IMR-90 (cell line): ENCODE measurements at regions of chr13 and their contacts with region 1.

Region 1: GRCh38 chr13:28658796-28659620 is at the start of gene POMP:
- DNase-seq: peak; percentile 95
- ATAC-seq: peak; percentile 80
- H3K4me3 ChIP-seq: peak within 1 kb of the TSS; percentile 93
- H3K27ac ChIP-seq: peak within 1 kb of the TSS; percentile 90
- H3K4me1 ChIP-seq: peaks cover 8% of the 10 kb centered on the region
- H3K27me3 ChIP-seq: no peaks in the 10 kb centered on the region
- CTCF ChIP-seq: no peak
- POLR2A ChIP-seq: peak; percentile 97
- RAD21 ChIP-seq: peak; percentile 25; the same call in 1 of the 2 replicates
- total RNA-seq, gene POMP: 60.2 and 117 TPM in 2 replicates

Region 2: GRCh38 chr13:28047757-28048388 is 611.1 kb before region 1 on chr13:
- CTCF ChIA-PET with region 1: no interaction called
- POLR2A ChIA-PET with region 1: no interaction called
- dilution Hi-C with region 1: no loop called
- in situ Hi-C with region 1: no loop called
- intact Hi-C with region 1: loop called (anchors 10 kb)
- DNase-seq: peak; percentile 79
- ATAC-seq: peak; percentile 7; the same call in 1 of the 2 replicates
- H3K4me3 ChIP-seq: no peak overlapping the region
- H3K27ac ChIP-seq: no peak overlapping the region
- H3K4me1 ChIP-seq: peaks cover 7% of the 10 kb centered on the region
- H3K27me3 ChIP-seq: no peaks in the 10 kb centered on the region
- CTCF ChIP-seq: no peak
- POLR2A ChIP-seq: no peak
- RAD21 ChIP-seq: no peak

Region 3: GRCh38 chr13:28329395-28330158 is 329.4 kb before region 1 on chr13:
- CTCF ChIA-PET with region 1: interaction called, 4 read pairs
- POLR2A ChIA-PET with region 1: no interaction called
- dilution Hi-C with region 1: no loop called
- in situ Hi-C with region 1: no loop called
- intact Hi-C with region 1: loop called (anchors 2 kb)
- DNase-seq: peak; percentile 97
- ATAC-seq: peak; percentile 98
- H3K4me3 ChIP-seq: no peak overlapping the region
- H3K27ac ChIP-seq: peak overlapping the region; percentile 57
- H3K4me1 ChIP-seq: peaks cover 12% of the 10 kb centered on the region
- H3K27me3 ChIP-seq: no peaks in the 10 kb centered on the region
- CTCF ChIP-seq: no peak
- POLR2A ChIP-seq: peak; percentile 48; the same call in 1 of the 2 replicates
- RAD21 ChIP-seq: peak; percentile 37

Region 4: DNA sequence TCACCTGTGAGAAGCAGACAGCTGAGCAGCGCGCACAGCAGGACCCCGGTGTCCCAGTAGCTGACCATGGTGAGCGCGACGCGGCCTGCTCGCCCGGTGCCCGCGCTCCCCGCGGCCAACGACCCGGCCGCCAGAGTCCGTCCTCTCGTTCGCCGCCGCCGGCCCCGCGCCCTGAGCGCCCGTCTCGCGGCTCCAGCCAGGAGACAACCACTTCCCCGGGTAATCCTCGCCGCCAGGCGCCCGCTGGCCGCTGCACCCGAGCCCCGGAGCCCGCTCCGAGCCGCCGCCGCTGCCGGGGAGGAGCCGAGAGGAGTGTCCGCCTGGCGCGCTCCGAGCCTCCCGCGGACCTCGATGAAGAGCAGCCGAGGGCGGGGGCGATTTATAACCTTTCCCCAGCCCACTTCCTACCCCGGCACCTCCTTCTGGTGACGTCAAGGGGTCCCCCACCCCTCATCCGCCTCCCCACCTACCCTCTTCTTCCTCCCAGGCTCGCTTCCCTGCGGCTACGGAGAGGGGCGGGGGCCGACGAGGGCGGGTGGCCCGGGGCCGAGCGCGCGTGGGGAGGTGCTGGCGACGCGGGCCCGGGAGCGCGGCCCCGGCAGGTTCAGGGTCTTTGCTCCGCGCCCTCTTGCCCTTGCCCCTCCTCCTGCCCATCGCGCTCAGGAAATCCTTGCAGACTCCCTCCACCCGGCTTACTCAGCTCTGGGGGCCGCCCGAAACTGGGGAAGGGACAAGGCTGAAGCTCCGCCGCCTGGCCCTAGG is 164.1 kb before region 1 on chr13 and contains the start of gene FLT1:
- CTCF ChIA-PET with region 1: no interaction called
- POLR2A ChIA-PET with region 1: no interaction called
- dilution Hi-C with region 1: no loop called
- in situ Hi-C with region 1: no loop called
- intact Hi-C with region 1: loop called (anchors 5 kb)
- DNase-seq: peak; percentile 38
- ATAC-seq: peak; percentile 68
- H3K4me3 ChIP-seq: peak within 1 kb of the TSS; percentile 94
- H3K27ac ChIP-seq: no peak within 1 kb of the TSS; the same call in 1 of the 2 replicates
- H3K4me1 ChIP-seq: peaks cover 4% of the 10 kb centered on the region; the same call in 1 of the 2 replicates
- H3K27me3 ChIP-seq: peaks cover 22% of the 10 kb centered on the region; the same call in 1 of the 2 replicates
- CTCF ChIP-seq: no peak
- POLR2A ChIP-seq: peak; percentile 64; the same call in 1 of the 2 replicates
- RAD21 ChIP-seq: no peak; the same call in 1 of the 2 replicates
- total RNA-seq, gene FLT1: 10.0 and 10.4 TPM in 2 replicates

Region 5: DNA sequence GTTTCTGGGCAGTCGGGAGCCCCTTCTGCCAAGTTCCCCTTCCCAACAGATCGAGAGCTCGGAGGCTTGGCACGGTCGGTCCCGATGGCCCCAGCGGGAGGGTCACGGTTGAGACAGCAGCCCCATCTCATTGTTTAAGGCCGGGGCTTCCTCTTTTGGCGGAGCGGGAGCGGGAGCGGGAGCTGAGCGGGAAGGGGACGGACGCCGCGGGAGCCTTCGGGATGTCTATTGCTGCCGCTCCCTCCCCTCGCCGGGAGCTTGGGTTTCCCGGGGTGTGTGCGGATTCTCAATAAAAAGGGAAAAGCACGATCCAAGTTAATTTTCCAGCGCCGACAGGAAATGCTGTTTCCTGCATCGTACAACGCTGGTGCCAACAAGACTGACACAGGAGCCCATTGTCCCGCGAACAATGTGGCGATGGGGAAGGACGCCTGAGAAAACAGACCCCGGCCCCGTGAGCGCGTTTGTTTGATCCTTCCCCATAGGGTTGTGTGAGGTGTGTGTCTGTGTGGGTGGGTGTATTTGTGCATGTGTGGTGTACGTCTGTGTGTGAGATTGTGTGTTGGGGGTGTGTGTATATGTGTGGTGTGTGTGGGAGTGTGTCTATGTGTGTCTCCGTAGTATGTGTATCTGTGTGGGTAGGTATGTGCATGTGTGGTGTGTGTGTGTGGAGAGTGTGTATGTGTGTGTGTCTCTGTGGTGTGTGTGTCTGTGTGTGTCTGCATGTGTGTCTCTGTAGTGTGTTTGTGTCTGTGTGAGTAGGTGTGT is 127.7 kb before region 1 on chr13:
- CTCF ChIA-PET with region 1: no interaction called
- POLR2A ChIA-PET with region 1: interaction called, 3 read pairs
- dilution Hi-C with region 1: no loop called
- in situ Hi-C with region 1: no loop called
- intact Hi-C with region 1: loop called (anchors 5 kb)
- DNase-seq: peak; percentile 30
- ATAC-seq: peak; percentile 27
- H3K4me3 ChIP-seq: peak overlapping the region; percentile 37
- H3K27ac ChIP-seq: no peak overlapping the region
- H3K4me1 ChIP-seq: peaks cover 11% of the 10 kb centered on the region
- H3K27me3 ChIP-seq: peaks cover 3% of the 10 kb centered on the region; the same call in 1 of the 2 replicates
- CTCF ChIP-seq: no peak
- POLR2A ChIP-seq: no peak
- RAD21 ChIP-seq: no peak